ENCODE measurements at regions of chr1 and their contacts with region 1.

Region 1: GRCh38 chr1:150464422-150464826 is 22.8 kb upstream of the TARS2 start:
- DNase-seq: peak; percentile 79
- CTCF ChIP-seq: peak; percentile 64

Region 2: GRCh38 chr1:150168960-150169601 is 295.3 kb before region 1 on chr1:
- in situ Hi-C with region 1: no loop called
- DNase-seq: peak; percentile 74
- CTCF ChIP-seq: peak; percentile 90

Region 3: DNA sequence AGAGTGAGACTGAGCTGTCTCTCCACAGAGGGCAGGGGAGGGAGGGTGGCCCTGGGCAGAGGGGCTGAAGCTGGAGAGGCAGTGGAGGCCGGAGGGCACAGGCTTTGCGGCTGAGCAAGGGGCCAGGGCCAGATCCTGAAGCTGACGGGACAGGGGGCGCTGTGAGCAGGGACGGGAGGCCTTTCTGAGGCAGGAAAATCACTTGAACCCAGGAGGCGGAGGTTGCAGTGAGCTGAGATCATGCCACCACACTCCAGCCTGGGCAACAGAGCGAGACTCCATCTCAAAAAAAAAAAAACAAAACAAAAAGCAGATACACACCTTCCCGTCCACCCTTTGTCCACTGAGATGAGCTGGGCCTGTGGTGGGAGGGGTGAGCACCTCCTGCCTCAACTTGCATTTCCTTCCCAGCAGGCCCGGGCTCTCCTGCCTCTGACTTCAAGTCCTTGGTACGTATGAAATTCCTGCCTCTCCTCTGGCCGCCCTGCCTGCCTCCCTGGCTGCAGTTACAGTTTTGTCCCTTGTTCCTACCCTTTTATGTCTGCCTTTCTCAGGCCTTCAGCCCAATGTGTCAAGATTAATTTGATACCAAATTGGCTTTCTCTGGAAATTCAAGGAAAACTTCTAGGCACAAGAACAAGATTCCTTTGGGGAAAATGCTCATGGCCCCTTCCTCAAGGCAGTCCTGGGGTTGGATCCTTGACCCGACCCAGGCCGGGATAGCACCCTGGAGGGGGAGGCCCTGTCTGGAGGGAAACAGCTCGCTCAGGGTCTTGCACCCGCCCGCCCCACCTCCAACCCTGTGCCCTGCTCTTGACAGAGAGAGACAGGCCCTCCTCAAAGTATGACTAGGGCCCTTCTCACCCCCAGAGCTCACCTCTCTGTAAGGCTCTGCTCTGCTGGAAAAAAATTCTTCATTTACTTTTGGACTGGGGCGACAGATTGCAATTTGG is 73.6 kb after region 1 on chr1:
- in situ Hi-C with region 1: loop called (anchors 10 kb)
- DNase-seq: no peak
- CTCF ChIP-seq: peak; percentile 9

Measured in GM13977 (cell line).